SK-N-SH (cell line): ENCODE measurements at regions of chr12 and their contacts with region 1.

Region 1: DNA sequence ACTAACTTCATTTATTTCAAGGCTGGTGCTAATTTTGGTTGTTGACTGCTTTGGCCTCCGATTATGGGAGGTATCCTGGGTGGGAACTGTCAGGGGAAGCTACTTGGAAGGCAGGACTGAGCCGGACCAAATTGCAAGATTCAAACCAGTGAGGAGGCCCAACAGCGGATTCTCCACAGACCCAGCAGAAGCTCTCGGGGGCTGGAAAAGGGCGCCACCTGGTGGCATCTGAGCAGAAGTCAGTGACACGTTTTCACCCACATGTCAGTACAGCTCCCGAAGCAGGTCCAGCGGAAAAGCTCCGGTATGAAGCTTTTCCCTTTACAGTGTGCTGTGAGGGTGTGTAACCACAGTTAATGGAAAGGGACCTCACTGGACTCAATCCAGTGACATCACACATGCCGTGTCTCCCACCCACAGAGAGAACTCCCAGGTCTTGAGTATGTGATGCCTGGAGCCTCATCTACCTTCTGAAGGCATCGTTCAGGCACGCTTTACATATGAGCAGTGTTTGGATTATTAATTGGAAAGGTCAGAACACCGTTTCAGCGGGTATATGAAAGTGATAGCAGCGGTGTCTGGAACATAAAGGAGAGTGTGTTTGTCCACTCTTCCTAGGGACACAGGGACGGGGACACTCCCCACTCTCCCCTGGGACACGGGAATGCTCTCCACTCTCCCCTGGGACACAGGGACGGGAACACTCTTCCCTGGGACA is 3.6 kb upstream of the P2RX2 start:
- DNase-seq: peak; percentile 88
- H3K4me3 ChIP-seq: no peak overlapping the region; a peak in 1 of 4 replicates
- H3K27ac ChIP-seq: no peak overlapping the region
- H3K4me1 ChIP-seq: peaks cover 0 to 12% of the 10 kb centered on the region in 2 experiments; a peak in 1 of 4 replicates
- H3K27me3 ChIP-seq: peaks cover 47% of the 10 kb centered on the region
- CTCF ChIP-seq: peak; percentile 89
- EP300 ChIP-seq: no peak
- RAD21 ChIP-seq: peak; percentile 89

Region 2: GRCh38 chr12:132600048-132601032 is 14.7 kb before region 1 on chr12:
- CTCF ChIA-PET with region 1: interaction called, 122 read pairs
- POLR2A ChIA-PET with region 1: no interaction called
- DNase-seq: peak; percentile 91
- H3K4me3 ChIP-seq: peak overlapping the region; percentile 41 to 65
- H3K27ac ChIP-seq: no peak overlapping the region
- H3K4me1 ChIP-seq: peaks cover 0 to 20% of the 10 kb centered on the region in 2 experiments; a peak in 1 of 4 replicates
- H3K27me3 ChIP-seq: peaks cover 31% of the 10 kb centered on the region
- CTCF ChIP-seq: peak; percentile 80
- EP300 ChIP-seq: no peak
- RAD21 ChIP-seq: peak; percentile 79

Region 3: DNA sequence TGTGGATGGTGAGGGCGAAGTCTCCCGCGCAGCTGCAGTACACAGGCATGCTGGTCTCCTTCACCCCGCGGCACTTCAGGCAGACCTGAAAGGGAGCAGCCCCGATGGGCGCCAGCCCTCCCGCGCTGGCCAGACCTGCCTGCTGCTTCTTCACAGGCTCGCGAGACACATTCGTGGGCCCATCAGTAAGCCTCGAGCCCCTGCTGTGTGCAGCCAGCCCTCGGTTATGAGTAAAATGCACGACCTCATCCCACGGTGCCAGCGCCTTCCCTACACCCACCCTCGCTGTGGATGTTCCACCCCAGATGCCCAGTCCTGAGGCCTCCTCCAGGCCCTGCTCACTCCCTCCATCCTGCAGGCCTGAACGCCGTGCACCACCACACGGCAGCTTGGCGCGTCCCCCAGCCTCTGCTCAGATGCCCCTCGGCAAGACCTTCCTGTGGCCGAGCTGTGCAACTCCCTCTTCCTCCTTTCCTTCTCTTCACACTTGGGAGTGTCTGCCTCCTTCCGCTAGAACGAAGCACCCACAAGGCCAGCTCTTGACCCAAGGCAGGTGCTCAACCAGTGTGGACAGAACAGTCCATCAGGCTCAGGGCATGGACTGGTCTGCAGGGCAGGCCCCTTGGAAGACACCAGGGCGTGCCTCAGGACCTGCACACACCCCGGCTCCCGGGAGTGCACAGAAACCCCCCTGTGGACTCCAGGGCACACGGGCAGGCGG is 10.1 kb after region 1 on chr12:
- CTCF ChIA-PET with region 1: interaction called, 19 read pairs
- POLR2A ChIA-PET with region 1: no interaction called
- DNase-seq: no peak
- H3K4me3 ChIP-seq: no peak overlapping the region
- H3K27ac ChIP-seq: no peak overlapping the region
- H3K4me1 ChIP-seq: peaks cover 0 to 11% of the 10 kb centered on the region in 2 experiments; a peak in 2 of 4 replicates
- H3K27me3 ChIP-seq: 0 out of 2 replicates have a peak, but pooled peaks cover 4% of the 10 kb centered on the region
- CTCF ChIP-seq: no peak
- EP300 ChIP-seq: no peak
- RAD21 ChIP-seq: no peak

Region 4: GRCh38 chr12:132638541-132639418 is 23.8 kb after region 1 on chr12:
- CTCF ChIA-PET with region 1: interaction called, 26 read pairs
- POLR2A ChIA-PET with region 1: no interaction called
- DNase-seq: peak; percentile 69
- H3K4me3 ChIP-seq: no peak overlapping the region; a peak in 1 of 4 replicates
- H3K27ac ChIP-seq: no peak overlapping the region
- H3K4me1 ChIP-seq: no peaks in the 10 kb centered on the region
- H3K27me3 ChIP-seq: no peaks in the 10 kb centered on the region
- CTCF ChIP-seq: peak; percentile 80
- EP300 ChIP-seq: no peak
- RAD21 ChIP-seq: peak; percentile 56